HepG2 (cell line): ENCODE measurements at regions of chr15 and their contacts with region 1.

Region 1: GRCh38 chr15:75229191-75230015 is 27.7 kb downstream of the C15orf39 start:
- DNase-seq: no peak
- ATAC-seq: no peak
- H3K4me3 ChIP-seq: no peak overlapping the region
- H3K27ac ChIP-seq: no peak overlapping the region
- H3K4me1 ChIP-seq: peaks cover 14% of the 10 kb centered on the region; the same call in 1 of the 2 replicates
- H3K27me3 ChIP-seq: peaks cover 5 to 56% of the 10 kb centered on the region in 2 experiments; a peak in 3 of 5 replicates
- CTCF ChIP-seq: no peak
- EP300 ChIP-seq: no peak
- POLR2A ChIP-seq: no peak
- RAD21 ChIP-seq: no peak

Region 2: GRCh38 chr15:75107908-75108838 is 121.2 kb before region 1 on chr15:
- CTCF ChIA-PET with region 1: no interaction called
- POLR2A ChIA-PET with region 1: no interaction called
- in situ Hi-C with region 1: no loop called
- intact Hi-C with region 1: no loop called
- DNase-seq: peak; percentile 27
- ATAC-seq: peak; percentile 30; the same call in 1 of the 3 replicates
- H3K4me3 ChIP-seq: no peak overlapping the region
- H3K27ac ChIP-seq: no peak overlapping the region
- H3K4me1 ChIP-seq: peaks cover 54% of the 10 kb centered on the region
- H3K27me3 ChIP-seq: 0 out of 5 replicates have a peak, but pooled peaks cover 0 to 1% of the 10 kb centered on the region in 2 experiments
- CTCF ChIP-seq: no peak
- EP300 ChIP-seq: no peak
- POLR2A ChIP-seq: no peak
- RAD21 ChIP-seq: no peak

Region 3: GRCh38 chr15:75201609-75202250 is 27.7 kb before region 1 on chr15 and contains the start of gene C15orf39:
- CTCF ChIA-PET with region 1: no interaction called
- POLR2A ChIA-PET with region 1: no interaction called
- in situ Hi-C with region 1: no loop called
- intact Hi-C with region 1: no loop called
- DNase-seq: peak; percentile 33
- ATAC-seq: peak; percentile 63
- H3K4me3 ChIP-seq: peak within 1 kb of the TSS; percentile 88 to 98 (median 91)
- H3K27ac ChIP-seq: peak within 1 kb of the TSS; percentile 80
- H3K4me1 ChIP-seq: peaks cover 77% of the 10 kb centered on the region
- H3K27me3 ChIP-seq: no peaks in the 10 kb centered on the region; a peak in 1 of 5 replicates
- CTCF ChIP-seq: peak; percentile 67
- EP300 ChIP-seq: no peak
- POLR2A ChIP-seq: peak in 1 of 2 experiments; percentile 89; a peak in 2 of 4 replicates
- RAD21 ChIP-seq: peak; percentile 85
- total RNA-seq, gene C15orf39: 13.5 and 17.5 TPM in 2 replicates

Region 4: GRCh38 chr15:75371486-75371885 is 142.1 kb after region 1 on chr15:
- CTCF ChIA-PET with region 1: no interaction called
- POLR2A ChIA-PET with region 1: no interaction called
- in situ Hi-C with region 1: no loop called
- intact Hi-C with region 1: no loop called
- DNase-seq: no peak
- ATAC-seq: no peak
- H3K4me3 ChIP-seq: no peak overlapping the region
- H3K27ac ChIP-seq: no peak overlapping the region
- H3K4me1 ChIP-seq: peaks cover 39% of the 10 kb centered on the region
- H3K27me3 ChIP-seq: no peaks in the 10 kb centered on the region
- CTCF ChIP-seq: no peak
- EP300 ChIP-seq: no peak
- POLR2A ChIP-seq: no peak
- RAD21 ChIP-seq: no peak

Region 5: GRCh38 chr15:75758071-75758872 is 528.9 kb after region 1 on chr15:
- CTCF ChIA-PET with region 1: no interaction called
- POLR2A ChIA-PET with region 1: no interaction called
- in situ Hi-C with region 1: loop called (anchors 25 kb)
- intact Hi-C with region 1: no loop called
- DNase-seq: peak; percentile 77
- ATAC-seq: peak; percentile 82
- H3K4me3 ChIP-seq: peak overlapping the region; percentile 42 to 49 (median 47)
- H3K27ac ChIP-seq: peak overlapping the region; percentile 37
- H3K4me1 ChIP-seq: peaks cover 47% of the 10 kb centered on the region
- H3K27me3 ChIP-seq: no peaks in the 10 kb centered on the region
- CTCF ChIP-seq: peak; percentile 51
- EP300 ChIP-seq: no peak
- POLR2A ChIP-seq: peak in 1 of 2 experiments; percentile 69; a peak in 2 of 4 replicates
- RAD21 ChIP-seq: 0 out of 2 replicates have a peak, but pooled peaks have one; percentile 8